T-cell (primary cell): ENCODE measurements at regions of chr6 and their contacts with region 1.

Region 1: DNA sequence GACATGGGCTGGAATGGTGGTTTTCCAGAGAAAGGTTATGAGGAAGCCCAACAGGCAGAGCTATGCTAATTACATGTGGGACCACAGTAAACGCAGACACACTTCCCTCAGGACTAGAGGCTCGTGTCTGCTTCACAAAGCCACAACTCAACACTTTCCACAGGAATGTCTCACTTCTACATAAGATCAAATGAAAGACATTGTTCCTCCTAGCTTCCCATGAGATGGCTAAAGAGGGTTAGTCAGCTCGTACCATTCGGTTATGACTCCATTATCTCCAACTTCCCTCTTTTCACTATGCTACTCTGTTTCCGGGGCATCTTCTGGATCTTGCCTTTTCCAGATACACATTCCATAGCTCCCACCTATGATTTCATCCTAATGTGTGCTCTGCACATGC is 29.1 kb upstream of the ZC3H12D start:
- DNase-seq: no peak
- ATAC-seq: no peak
- H3K4me3 ChIP-seq: no peak overlapping the region
- H3K4me3 Mint-ChIP-seq: no peak overlapping the region
- H3K27ac ChIP-seq: no peak overlapping the region
- H3K27ac Mint-ChIP-seq: peak overlapping the region; percentile 48 to 75
- H3K4me1 ChIP-seq: peaks cover 0 to 2% of the 10 kb centered on the region in 2 experiments
- H3K4me1 Mint-ChIP-seq: peaks cover 36 to 49% (median 45%) of the 10 kb centered on the region in 3 donors
- H3K27me3 ChIP-seq: no peaks in the 10 kb centered on the region
- H3K27me3 Mint-ChIP-seq: no peaks in the 10 kb centered on the region

Region 2: GRCh38 chr6:149012040-149012545 is 501.8 kb before region 1 on chr6:
- CTCF ChIA-PET with region 1: no interaction called
- POLR2A ChIA-PET with region 1: no interaction called
- DNase-seq: no peak
- ATAC-seq: no peak
- H3K4me3 ChIP-seq: no peak overlapping the region
- H3K4me3 Mint-ChIP-seq: no peak overlapping the region
- H3K27ac ChIP-seq: no peak overlapping the region
- H3K27ac Mint-ChIP-seq: no peak overlapping the region
- H3K4me1 ChIP-seq: no peaks in the 10 kb centered on the region
- H3K4me1 Mint-ChIP-seq: no peaks in the 10 kb centered on the region
- H3K27me3 ChIP-seq: no peaks in the 10 kb centered on the region
- H3K27me3 Mint-ChIP-seq: peaks cover 0 to 4% of the 10 kb centered on the region in 2 donors

Region 3: GRCh38 chr6:149028767-149029405 is 485.0 kb before region 1 on chr6:
- CTCF ChIA-PET with region 1: interaction called, 10 to 28 read pairs
- POLR2A ChIA-PET with region 1: no interaction called
- DNase-seq: peak in 32 of 35 experiments; percentile 29 to 92 (median 54)
- ATAC-seq: peak; percentile 34 to 77 (median 62)
- H3K4me3 ChIP-seq: no peak overlapping the region
- H3K4me3 Mint-ChIP-seq: no peak overlapping the region
- H3K27ac ChIP-seq: no peak overlapping the region
- H3K27ac Mint-ChIP-seq: peak overlapping the region in 1 of 2 donors; percentile 81
- H3K4me1 ChIP-seq: peaks cover 3 to 17% of the 10 kb centered on the region in 2 experiments
- H3K4me1 Mint-ChIP-seq: peaks cover 23 to 49% (median 34%) of the 10 kb centered on the region in 3 donors
- H3K27me3 ChIP-seq: peaks cover 0 to 4% of the 10 kb centered on the region in 2 experiments
- H3K27me3 Mint-ChIP-seq: no peaks in the 10 kb centered on the region

Region 4: DNA sequence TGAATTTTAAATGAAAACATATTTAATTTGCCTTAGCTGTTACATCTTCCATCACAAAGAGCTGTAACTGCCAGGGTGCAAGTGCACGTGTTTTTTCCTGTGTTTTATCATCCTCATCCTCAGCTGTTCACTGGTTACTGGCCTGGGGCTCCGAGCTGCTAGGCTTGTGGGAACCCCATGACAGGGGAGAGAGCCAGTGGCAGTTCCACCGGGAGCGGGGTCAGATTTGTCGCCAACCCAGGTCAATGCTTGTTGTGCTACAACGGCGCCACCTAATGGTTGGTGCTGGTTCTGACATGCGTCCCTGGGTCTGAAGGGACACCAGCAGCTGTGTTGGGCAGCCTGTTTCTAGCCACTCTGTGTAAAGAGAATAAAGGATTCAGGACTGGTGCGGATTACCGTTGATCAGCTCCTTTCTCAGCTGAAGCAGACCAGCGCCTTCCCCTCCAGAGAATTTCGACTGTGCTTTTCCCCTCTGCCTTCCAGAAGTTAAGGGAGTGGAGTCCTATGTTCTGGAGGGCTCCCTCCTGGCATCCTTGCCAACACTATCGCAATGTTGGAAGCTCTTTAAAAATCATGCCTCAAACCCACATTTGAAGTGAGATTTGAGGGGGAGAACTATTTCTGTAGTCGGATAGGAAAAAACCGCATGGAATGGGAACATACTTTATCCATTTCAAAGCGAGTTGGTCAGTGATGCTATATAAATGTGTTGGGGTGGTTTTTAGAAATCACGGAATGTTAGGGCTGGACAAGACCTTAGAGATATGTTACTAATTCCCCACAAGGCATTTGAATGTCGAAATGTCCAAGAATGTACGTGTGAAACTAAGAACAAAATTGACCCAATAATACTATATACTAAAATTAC is 81.8 kb before region 1 on chr6:
- CTCF ChIA-PET with region 1: interaction called, 3 to 11 read pairs
- POLR2A ChIA-PET with region 1: interaction called in 1 of 2 experiments, 3 read pairs
- DNase-seq: peak; percentile 54 to 92 (median 79)
- ATAC-seq: peak; percentile 86 to 94 (median 91)
- H3K4me3 ChIP-seq: peak overlapping the region; percentile 7 to 32
- H3K4me3 Mint-ChIP-seq: peak overlapping the region in 2 of 3 donors; percentile 54 to 67
- H3K27ac ChIP-seq: no peak overlapping the region
- H3K27ac Mint-ChIP-seq: peak overlapping the region; percentile 78 to 84
- H3K4me1 ChIP-seq: peaks cover 6 to 9% of the 10 kb centered on the region in 2 experiments
- H3K4me1 Mint-ChIP-seq: peaks cover under 1 to 6% (median 5%) of the 10 kb centered on the region in 3 donors
- H3K27me3 ChIP-seq: no peaks in the 10 kb centered on the region
- H3K27me3 Mint-ChIP-seq: no peaks in the 10 kb centered on the region

Region 5: GRCh38 chr6:149473080-149474052 is 40.5 kb before region 1 on chr6:
- CTCF ChIA-PET with region 1: interaction called, 20 to 26 read pairs
- POLR2A ChIA-PET with region 1: interaction called, 3 read pairs
- DNase-seq: peak in 11 of 35 experiments; percentile 14 to 51 (median 27)
- ATAC-seq: peak; percentile 52 to 58 (median 55)
- H3K4me3 ChIP-seq: no peak overlapping the region
- H3K4me3 Mint-ChIP-seq: peak overlapping the region; percentile 31 to 41 (median 35)
- H3K27ac ChIP-seq: peak overlapping the region; percentile 2
- H3K27ac Mint-ChIP-seq: peak overlapping the region; percentile 55 to 75
- H3K4me1 ChIP-seq: peaks cover 0 to 72% of the 10 kb centered on the region in 2 experiments
- H3K4me1 Mint-ChIP-seq: peaks cover 34 to 79% (median 70%) of the 10 kb centered on the region in 3 donors
- H3K27me3 ChIP-seq: no peaks in the 10 kb centered on the region
- H3K27me3 Mint-ChIP-seq: no peaks in the 10 kb centered on the region

Region 6: GRCh38 chr6:149493761-149494320 is 20.1 kb before region 1 on chr6:
- CTCF ChIA-PET with region 1: interaction called, 3 to 20 read pairs
- POLR2A ChIA-PET with region 1: interaction called, 5 to 35 read pairs
- DNase-seq: no peak
- ATAC-seq: no peak
- H3K4me3 ChIP-seq: no peak overlapping the region
- H3K4me3 Mint-ChIP-seq: peak overlapping the region in 1 of 3 donors; percentile 68
- H3K27ac ChIP-seq: peak overlapping the region; percentile 49
- H3K27ac Mint-ChIP-seq: peak overlapping the region; percentile 95 to 98
- H3K4me1 ChIP-seq: peaks cover 15 to 44% of the 10 kb centered on the region in 2 experiments
- H3K4me1 Mint-ChIP-seq: peaks cover 60 to 84% (median 79%) of the 10 kb centered on the region in 3 donors
- H3K27me3 ChIP-seq: no peaks in the 10 kb centered on the region
- H3K27me3 Mint-ChIP-seq: no peaks in the 10 kb centered on the region

Region 7: DNA sequence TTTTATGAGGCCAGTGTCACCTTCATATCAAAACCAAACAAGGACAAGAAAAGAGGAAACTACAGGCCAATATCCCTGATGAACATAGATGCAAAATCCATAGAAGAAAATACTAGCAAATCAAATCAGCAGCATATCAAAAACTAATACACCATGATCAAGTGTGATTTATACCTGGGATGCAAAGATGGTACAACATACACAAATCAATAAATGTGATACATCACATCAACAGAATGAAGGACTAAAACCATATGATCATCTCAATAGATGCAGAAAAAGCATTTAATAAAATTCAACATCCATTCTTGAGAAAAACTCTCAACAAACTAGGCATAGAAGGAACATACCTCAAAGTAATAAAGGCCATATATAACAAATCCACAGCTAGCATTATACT is 44.1 kb after region 1 on chr6:
- CTCF ChIA-PET with region 1: no interaction called
- POLR2A ChIA-PET with region 1: no interaction called
- DNase-seq: no peak
- ATAC-seq: no peak
- H3K4me3 ChIP-seq: no peak overlapping the region
- H3K4me3 Mint-ChIP-seq: no peak overlapping the region
- H3K27ac ChIP-seq: no peak overlapping the region
- H3K27ac Mint-ChIP-seq: no peak overlapping the region
- H3K4me1 ChIP-seq: no peaks in the 10 kb centered on the region
- H3K4me1 Mint-ChIP-seq: no peaks in the 10 kb centered on the region
- H3K27me3 ChIP-seq: peaks cover 3 to 7% of the 10 kb centered on the region in 2 experiments
- H3K27me3 Mint-ChIP-seq: peaks cover 6 to 19% of the 10 kb centered on the region in 2 donors